Endothelial cell of umbilical vein (primary cell): ENCODE measurements at regions of chr9 and their contacts with region 1.

Region 1: GRCh38 chr9:14314929-14315645 is 1.1 kb upstream of the NFIB start:
- DNase-seq: peak; percentile 67
- H3K4me3 ChIP-seq: peak overlapping the region; percentile 61 to 87 (median 85)
- H3K27ac ChIP-seq: peak overlapping the region; percentile 96
- H3K4me1 ChIP-seq: peaks cover 55% of the 10 kb centered on the region
- H3K27me3 ChIP-seq: no peaks in the 10 kb centered on the region
- CTCF ChIP-seq: no peak
- POLR2A ChIP-seq: no peak

Region 2: GRCh38 chr9:13568841-13569601 is 746.1 kb before region 1 on chr9:
- CTCF ChIA-PET with region 1: no interaction called
- POLR2A ChIA-PET with region 1: no interaction called
- dilution Hi-C with region 1: no loop called
- intact Hi-C with region 1: loop called (anchors 10 kb)
- DNase-seq: peak; percentile 62
- H3K4me3 ChIP-seq: peak overlapping the region in 2 of 3 experiments; percentile 3 to 45
- H3K27ac ChIP-seq: peak overlapping the region; percentile 54
- H3K4me1 ChIP-seq: peaks cover 25% of the 10 kb centered on the region
- H3K27me3 ChIP-seq: no peaks in the 10 kb centered on the region
- CTCF ChIP-seq: no peak
- POLR2A ChIP-seq: no peak

Region 3: DNA sequence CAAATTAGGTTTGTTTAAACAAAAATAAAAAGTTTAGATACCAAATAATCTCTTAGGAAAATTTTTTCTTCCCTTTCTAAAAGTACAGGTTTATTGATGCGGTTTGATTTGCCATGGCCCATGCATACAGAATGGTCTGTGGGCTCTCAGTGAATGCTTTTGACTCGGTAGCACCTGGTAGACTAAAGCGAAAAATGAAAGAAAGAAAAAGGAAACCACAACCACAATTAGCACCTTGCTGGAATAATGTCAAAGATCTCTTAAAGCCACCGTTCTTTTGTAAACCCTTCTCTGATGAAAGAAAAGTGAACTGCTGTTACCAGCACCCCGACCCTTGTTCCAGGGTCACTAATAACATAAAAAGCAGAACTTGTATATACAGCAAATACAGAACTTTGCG is 159.0 kb before region 1 on chr9:
- CTCF ChIA-PET with region 1: interaction called, 6 read pairs
- POLR2A ChIA-PET with region 1: no interaction called
- dilution Hi-C with region 1: no loop called
- intact Hi-C with region 1: loop called (anchors 1 kb)
- DNase-seq: no peak
- H3K4me3 ChIP-seq: no peak overlapping the region
- H3K27ac ChIP-seq: peak overlapping the region; percentile 77
- H3K4me1 ChIP-seq: peaks cover 62% of the 10 kb centered on the region
- H3K27me3 ChIP-seq: no peaks in the 10 kb centered on the region
- CTCF ChIP-seq: no peak
- POLR2A ChIP-seq: no peak

Region 4: DNA sequence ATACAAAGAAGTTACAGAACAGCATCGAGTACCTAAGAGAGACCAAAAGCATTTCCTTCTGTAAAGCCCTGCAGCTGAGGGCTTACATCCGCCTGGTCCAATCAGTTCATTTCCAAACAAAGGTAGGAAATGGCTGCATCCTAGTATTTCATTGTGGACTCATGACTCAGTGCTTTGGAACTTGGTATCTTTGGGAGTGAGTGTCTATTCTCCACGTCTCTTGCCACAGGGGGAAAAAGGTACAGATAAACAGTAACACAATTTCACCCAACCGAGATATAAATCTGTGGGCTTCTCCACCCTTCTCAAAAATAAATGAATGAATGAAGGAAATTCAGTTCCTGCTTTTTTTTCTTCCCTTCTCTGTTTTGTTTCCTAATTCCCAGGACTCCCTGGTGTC is 76.5 kb before region 1 on chr9:
- CTCF ChIA-PET with region 1: interaction called, 9 read pairs
- POLR2A ChIA-PET with region 1: interaction called, 7 read pairs
- dilution Hi-C with region 1: no loop called
- intact Hi-C with region 1: loop called (anchors 1 kb)
- DNase-seq: peak; percentile 98
- H3K4me3 ChIP-seq: peak overlapping the region in 1 of 3 experiments; percentile 44
- H3K27ac ChIP-seq: peak overlapping the region; percentile 97
- H3K4me1 ChIP-seq: peaks cover 72% of the 10 kb centered on the region
- H3K27me3 ChIP-seq: no peaks in the 10 kb centered on the region
- CTCF ChIP-seq: no peak
- POLR2A ChIP-seq: peak; percentile 85

Region 5: DNA sequence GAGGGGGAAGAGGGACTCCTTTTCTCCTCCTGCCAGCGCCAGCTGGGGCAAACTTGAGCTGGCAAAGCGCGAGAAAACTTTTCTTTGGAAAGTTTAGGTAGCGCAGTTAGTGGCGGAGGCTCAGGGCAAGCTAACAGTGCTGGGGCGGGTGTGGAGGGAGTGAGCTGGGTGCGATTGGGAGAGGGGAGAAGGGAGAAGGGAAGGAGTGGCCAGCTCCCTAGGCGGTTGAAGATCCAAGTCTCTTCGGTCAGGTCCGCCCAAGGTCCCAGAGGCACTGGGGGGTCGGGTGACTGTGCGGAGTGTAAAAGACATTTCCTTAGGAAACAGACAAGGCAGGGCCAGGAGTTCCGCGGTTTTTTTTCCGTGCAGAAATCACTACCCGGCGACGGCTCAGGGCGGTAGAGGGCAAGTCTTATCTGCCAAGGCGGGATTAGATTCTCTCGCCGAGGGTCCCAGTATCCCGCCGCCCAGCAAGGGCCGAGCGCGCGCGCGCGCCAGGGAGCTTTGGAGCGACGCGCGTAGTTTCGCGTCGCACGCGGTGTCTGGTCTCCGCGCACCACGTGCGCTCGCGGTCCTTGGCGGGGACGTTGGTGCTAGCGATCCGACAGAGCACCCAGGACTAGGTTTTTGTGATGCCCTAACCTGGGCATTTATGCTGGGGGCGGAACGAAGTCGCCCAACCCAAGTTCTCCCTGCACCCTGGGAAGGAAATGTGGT is 32.5 kb after region 1 on chr9:
- CTCF ChIA-PET with region 1: interaction called, 25 read pairs
- POLR2A ChIA-PET with region 1: interaction called, 6 read pairs
- dilution Hi-C with region 1: no loop called
- intact Hi-C with region 1: loop called (anchors 1 kb)
- DNase-seq: peak; percentile 60
- H3K4me3 ChIP-seq: peak overlapping the region; percentile 17 to 57 (median 48)
- H3K27ac ChIP-seq: peak overlapping the region; percentile 32
- H3K4me1 ChIP-seq: peaks cover 57% of the 10 kb centered on the region
- H3K27me3 ChIP-seq: no peaks in the 10 kb centered on the region
- CTCF ChIP-seq: no peak
- POLR2A ChIP-seq: peak; percentile 31